ENCODE measurements at regions of chr15 and their contacts with region 1.

Region 1: GRCh38 chr15:99571299-99571698 is 5.5 kb downstream of the MEF2A start:
- H3K4me3 Mint-ChIP-seq: no peak overlapping the region
- H3K27ac Mint-ChIP-seq: no peak overlapping the region
- H3K4me1 Mint-ChIP-seq: peaks cover 51% of the 10 kb centered on the region
- H3K27me3 Mint-ChIP-seq: no peaks in the 10 kb centered on the region

Region 2: DNA sequence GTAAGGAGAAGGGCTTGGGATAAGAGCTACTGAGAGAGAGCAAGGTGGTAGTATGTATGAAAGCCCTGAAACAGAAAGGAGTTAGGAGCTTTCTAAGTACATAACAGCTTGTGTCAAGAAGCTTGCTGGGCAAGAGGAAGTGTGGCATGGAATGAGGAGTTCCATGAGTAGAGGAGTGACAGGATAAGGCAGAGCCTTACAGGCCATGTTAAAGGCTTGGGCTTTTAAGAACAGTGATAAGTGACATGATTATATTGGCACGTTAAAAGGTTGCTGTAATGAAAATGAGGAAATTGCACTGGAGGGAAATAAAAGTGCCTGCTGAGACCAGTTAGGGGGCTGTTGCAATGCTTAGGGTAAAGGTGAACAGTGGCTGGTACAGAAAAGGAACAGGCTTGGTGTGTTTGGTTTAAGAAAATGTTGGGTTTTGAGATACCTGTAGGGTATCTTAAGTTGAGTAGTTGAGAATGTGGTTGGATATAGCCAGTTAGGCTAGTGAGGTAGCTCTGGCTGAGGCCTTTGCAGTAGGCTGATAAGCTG is 43.5 kb after region 1 on chr15:
- intact Hi-C with region 1: loop called (anchors 5 kb)
- H3K4me3 Mint-ChIP-seq: peak overlapping the region; percentile 33
- H3K27ac Mint-ChIP-seq: peak overlapping the region; percentile 75
- H3K4me1 Mint-ChIP-seq: peaks cover 65% of the 10 kb centered on the region
- H3K27me3 Mint-ChIP-seq: no peaks in the 10 kb centered on the region

Measured in dendritic cell treated with granulocyte-macrophage colony-stimulating factor and Interleukin-4, amounts not matched to agents 40 ng/mL and 50 ng/mL, for 4 days (primary cell).